Calu3 (cell line): ENCODE measurements at regions of chr3 and their contacts with region 1.

Region 1: GRCh38 chr3:159732172-159733111 is 256.2 kb upstream of the IL12A start:
- DNase-seq: peak; percentile 52
- H3K4me3 Mint-ChIP-seq: peak overlapping the region; percentile 48
- H3K27ac Mint-ChIP-seq: no peak overlapping the region
- H3K4me1 Mint-ChIP-seq: peaks cover 28% of the 10 kb centered on the region
- H3K27me3 Mint-ChIP-seq: no peaks in the 10 kb centered on the region
- CTCF ChIP-seq: no peak

Region 2: GRCh38 chr3:159616212-159616825 is 116.1 kb before region 1 on chr3:
- CTCF ChIA-PET with region 1: no interaction called
- intact Hi-C with region 1: loop called (anchors 2 kb)
- DNase-seq: peak; percentile 81
- H3K4me3 Mint-ChIP-seq: no peak overlapping the region
- H3K27ac Mint-ChIP-seq: no peak overlapping the region
- H3K4me1 Mint-ChIP-seq: peaks cover 12% of the 10 kb centered on the region
- H3K27me3 Mint-ChIP-seq: no peaks in the 10 kb centered on the region
- CTCF ChIP-seq: peak; percentile 84

Region 3: GRCh38 chr3:159637883-159638542 is 94.4 kb before region 1 on chr3:
- CTCF ChIA-PET with region 1: interaction called, 7 read pairs
- intact Hi-C with region 1: loop called (anchors 5 kb)
- DNase-seq: peak; percentile 66
- H3K4me3 Mint-ChIP-seq: no peak overlapping the region
- H3K27ac Mint-ChIP-seq: no peak overlapping the region
- H3K4me1 Mint-ChIP-seq: peaks cover 52% of the 10 kb centered on the region
- H3K27me3 Mint-ChIP-seq: no peaks in the 10 kb centered on the region
- CTCF ChIP-seq: no peak